ENCODE measurements at regions of chr12 and their contacts with region 1.

Region 1: GRCh38 chr12:111685744-111686517 is at the starts of genes ACAD10 and BRAP:
- DNase-seq: peak; percentile 80 to 97 (median 92)

Region 2: DNA sequence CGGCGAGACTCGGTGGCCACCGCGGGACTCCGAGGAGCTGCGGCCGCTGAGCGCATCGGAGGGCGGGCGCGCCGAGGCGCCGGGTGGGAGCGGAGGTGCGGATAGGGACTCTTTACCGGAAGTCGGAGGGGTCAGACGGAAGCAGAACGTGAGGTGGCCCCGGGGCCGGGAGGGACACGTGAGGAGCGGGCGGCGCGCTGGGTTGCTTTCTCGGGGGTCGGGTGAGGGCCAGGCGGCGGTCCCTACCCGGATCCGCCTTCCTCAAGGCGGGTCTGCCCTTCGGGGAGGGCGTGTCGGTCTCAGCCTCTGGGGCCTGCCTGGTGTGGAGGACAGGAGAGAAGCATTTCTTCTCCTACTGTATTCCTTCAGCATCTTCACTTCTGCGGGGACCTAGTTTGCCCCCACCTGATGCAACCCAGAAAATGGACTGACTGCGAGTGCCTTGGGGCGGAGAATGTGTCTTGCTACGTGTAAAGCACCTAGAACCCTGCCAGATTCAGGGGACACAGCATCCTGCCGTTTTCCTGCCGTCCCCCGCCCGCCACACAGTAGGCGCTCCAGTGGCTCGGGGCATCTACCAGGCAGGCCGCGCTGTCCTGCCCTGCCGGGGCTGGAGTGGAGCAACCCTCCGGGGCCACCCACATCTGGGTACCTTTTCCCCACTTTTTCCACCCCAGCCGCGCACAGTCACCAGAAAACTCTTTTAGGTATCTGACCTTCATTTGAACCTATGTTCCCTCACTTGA is 86.3 kb before region 1 on chr12:
- intact Hi-C with region 1: loop called (anchors 2 kb)
- DNase-seq: peak; percentile 61 to 95 (median 87)

Region 3: GRCh38 chr12:111664961-111665865 is 20.7 kb before region 1 on chr12:
- intact Hi-C with region 1: no loop called
- DNase-seq: peak in 31 of 42 donors; percentile 14 to 75 (median 43)

Region 4: DNA sequence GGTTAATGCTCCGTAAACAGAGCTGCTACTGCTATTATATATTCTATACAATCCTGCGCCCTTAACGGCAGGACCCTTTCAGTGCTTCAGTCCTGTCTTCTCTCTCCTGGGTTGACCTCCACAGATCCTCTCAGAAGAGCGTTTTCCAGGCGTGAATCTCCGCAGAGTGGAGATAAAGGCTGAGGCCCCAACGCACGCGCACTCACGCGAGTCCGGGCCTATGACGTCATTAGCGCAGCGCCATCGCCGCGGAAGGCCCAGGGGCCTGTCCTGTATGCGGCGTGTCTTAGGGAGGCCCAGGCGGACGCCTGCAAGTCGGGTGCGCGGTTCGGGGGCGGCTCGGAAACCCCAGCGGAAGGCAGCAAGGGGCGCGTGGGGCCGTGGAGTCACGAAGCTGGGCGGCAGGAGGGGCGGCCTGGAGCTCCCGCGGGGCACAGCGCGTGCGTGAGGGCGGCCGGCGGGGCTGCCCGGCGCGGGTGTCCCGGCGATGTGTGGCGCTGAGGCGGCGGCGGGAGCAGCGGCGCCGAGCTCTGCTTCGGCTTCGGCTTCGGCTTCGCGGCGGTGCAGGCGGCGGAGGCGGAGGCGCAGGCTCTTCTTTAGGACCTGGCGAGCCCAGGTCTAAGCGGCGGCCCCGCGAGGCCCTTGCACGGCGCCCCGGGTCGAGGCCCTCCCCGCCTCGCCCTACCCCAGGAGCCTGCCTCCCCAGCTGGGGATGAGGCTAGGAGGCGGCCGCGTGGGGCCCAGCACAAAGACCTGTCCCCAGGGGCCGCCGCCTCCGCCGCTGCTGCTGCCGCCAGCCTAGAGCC is 156.0 kb after region 1 on chr12 and contains the start of gene MAPKAPK5:
- intact Hi-C with region 1: loop called (anchors 5 kb)
- DNase-seq: peak; percentile 76 to 95 (median 89)

Region 5: DNA sequence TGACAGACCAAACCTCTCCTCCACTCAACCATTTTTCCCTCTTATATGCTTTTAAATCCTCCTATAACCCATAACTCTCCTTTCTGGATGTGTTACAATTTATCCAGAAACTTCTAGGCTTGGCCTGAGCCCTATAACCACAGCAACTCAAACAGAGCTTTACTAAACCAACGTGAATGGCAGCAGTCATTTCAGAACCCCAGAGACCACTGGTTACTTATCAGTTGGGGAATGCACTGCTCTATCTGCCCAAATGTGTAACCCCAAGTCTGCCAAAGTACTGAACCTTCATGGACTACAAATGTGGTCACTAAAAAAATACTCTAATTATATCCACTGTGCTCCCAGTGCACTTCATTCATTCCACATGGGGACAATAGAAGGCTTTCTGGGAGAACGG is 380.6 kb after region 1 on chr12:
- intact Hi-C with region 1: no loop called
- DNase-seq: no peak